Dendritic cell treated with granulocyte-macrophage colony-stimulating factor and Interleukin-4, amounts not matched to agents 40 ng/mL and 50 ng/mL, for 4 days (primary cell): ENCODE measurements at regions of chr2 and their contacts with region 1.

Region 1: DNA sequence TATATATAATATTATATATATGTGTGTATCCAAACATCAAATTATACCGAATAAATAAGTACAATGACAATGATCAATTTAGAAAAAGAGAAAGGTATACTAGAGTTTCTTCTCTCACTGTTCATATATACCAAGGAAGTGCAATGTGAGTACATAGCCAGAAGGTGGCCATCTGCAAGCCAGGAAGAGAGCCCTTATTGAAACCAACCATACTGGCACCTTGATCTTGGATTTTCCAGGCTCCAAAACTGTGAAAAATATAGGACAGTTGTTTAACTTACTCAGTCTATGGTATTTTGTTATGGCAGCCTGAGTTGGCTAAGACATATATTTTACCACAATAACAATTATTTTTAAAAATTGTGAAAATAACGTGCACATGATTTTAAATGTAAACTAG is 1490.2 kb upstream of the SLC39A10 start:
- H3K4me3 Mint-ChIP-seq: no peak overlapping the region
- H3K27ac Mint-ChIP-seq: no peak overlapping the region
- H3K4me1 Mint-ChIP-seq: no peaks in the 10 kb centered on the region
- H3K27me3 Mint-ChIP-seq: no peaks in the 10 kb centered on the region

Region 2: GRCh38 chr2:194060269-194060668 is 106.5 kb before region 1 on chr2:
- intact Hi-C with region 1: loop called (anchors 5 kb)
- H3K4me3 Mint-ChIP-seq: no peak overlapping the region
- H3K27ac Mint-ChIP-seq: no peak overlapping the region
- H3K4me1 Mint-ChIP-seq: no peaks in the 10 kb centered on the region
- H3K27me3 Mint-ChIP-seq: no peaks in the 10 kb centered on the region

Region 3: GRCh38 chr2:194214192-194214591 is 47.4 kb after region 1 on chr2:
- intact Hi-C with region 1: no loop called
- H3K4me3 Mint-ChIP-seq: no peak overlapping the region
- H3K27ac Mint-ChIP-seq: no peak overlapping the region
- H3K4me1 Mint-ChIP-seq: no peaks in the 10 kb centered on the region
- H3K27me3 Mint-ChIP-seq: no peaks in the 10 kb centered on the region

Region 4: DNA sequence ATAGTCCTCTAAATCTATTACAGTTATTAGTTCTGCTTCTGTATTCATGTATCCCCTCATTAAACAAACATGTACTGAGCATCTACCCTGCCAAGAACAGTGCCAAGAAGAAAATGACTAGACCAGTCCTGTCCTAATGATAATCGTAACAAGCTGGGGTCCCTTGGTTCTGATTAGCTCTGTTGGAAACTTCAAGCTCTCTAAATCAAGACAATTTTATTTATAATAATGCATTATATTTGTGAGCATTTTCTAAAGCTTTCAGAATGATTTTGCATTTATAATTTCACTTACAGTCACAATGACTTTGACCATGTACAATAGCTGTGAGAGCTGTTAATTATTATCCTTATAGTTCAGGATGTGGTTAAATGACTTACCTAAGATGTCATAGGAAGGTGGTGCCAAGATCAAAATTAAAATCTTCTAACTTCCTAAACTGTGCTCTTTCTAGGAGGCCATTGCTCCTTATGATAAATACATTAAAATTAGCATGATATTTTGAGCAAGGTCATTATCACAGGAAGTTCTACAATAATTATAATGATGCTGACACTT is 1153.7 kb after region 1 on chr2:
- intact Hi-C with region 1: loop called (anchors 2 kb)
- H3K4me3 Mint-ChIP-seq: no peak overlapping the region
- H3K27ac Mint-ChIP-seq: no peak overlapping the region
- H3K4me1 Mint-ChIP-seq: no peaks in the 10 kb centered on the region
- H3K27me3 Mint-ChIP-seq: no peaks in the 10 kb centered on the region